A549 (cell line): ENCODE measurements at regions of chr20 and their contacts with region 1.

Region 1: GRCh38 chr20:62500237-62500864 is 24.6 kb upstream of the GATA5 start:
- DNase-seq: peak; percentile 40 to 80
- ATAC-seq: peak; percentile 55 to 77; a peak in 5 of 6 replicates
- H3K4me3 ChIP-seq: no peak overlapping the region
- H3K27ac ChIP-seq: no peak overlapping the region
- H3K4me1 ChIP-seq: peaks cover 14% of the 10 kb centered on the region
- CTCF ChIP-seq: peak; percentile 76
- EP300 ChIP-seq: no peak
- POLR2A ChIP-seq: no peak
- RAD21 ChIP-seq: peak; percentile 74 to 75

Region 2: DNA sequence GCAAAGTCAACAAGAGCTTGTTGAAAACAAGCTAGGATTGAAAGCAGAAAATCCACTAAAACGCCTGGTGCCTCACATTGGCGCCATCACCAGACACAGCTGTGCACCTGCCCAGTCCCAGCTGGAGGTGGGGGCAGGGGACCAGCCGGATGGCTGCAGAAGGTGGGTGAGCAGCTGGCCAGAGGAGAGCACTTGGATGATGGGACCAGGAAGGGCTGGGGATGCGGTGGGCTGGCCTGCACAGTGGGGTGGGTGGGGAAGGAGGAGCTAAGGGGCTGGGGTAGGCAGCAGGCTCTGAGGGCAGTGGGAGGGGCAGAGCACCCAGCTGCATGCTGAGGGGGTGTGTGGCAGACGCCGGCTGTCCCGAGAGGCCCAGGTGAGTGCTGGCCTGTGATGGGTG is 100.3 kb before region 1 on chr20:
- CTCF ChIA-PET with region 1: no interaction called
- POLR2A ChIA-PET with region 1: no interaction called
- DNase-seq: no peak
- ATAC-seq: no peak
- H3K4me3 ChIP-seq: no peak overlapping the region
- H3K27ac ChIP-seq: no peak overlapping the region
- H3K4me1 ChIP-seq: no peaks in the 10 kb centered on the region
- CTCF ChIP-seq: no peak
- EP300 ChIP-seq: no peak
- POLR2A ChIP-seq: no peak
- RAD21 ChIP-seq: no peak

Region 3: GRCh38 chr20:62409931-62410745 is 90.2 kb before region 1 on chr20:
- CTCF ChIA-PET with region 1: interaction called, 19 read pairs
- POLR2A ChIA-PET with region 1: no interaction called
- DNase-seq: peak; percentile 49 to 51
- ATAC-seq: peak; percentile 27 to 47; a peak in 5 of 6 replicates
- H3K4me3 ChIP-seq: 0 out of 3 replicates have a peak overlapping the region, but pooled peaks have one; percentile 7
- H3K27ac ChIP-seq: peak overlapping the region in 1 of 2 experiments; percentile 30; a peak in 2 of 6 replicates
- H3K4me1 ChIP-seq: peaks cover 21% of the 10 kb centered on the region
- CTCF ChIP-seq: peak; percentile 61
- EP300 ChIP-seq: no peak
- POLR2A ChIP-seq: no peak
- RAD21 ChIP-seq: peak; percentile 56 to 64

Region 4: DNA sequence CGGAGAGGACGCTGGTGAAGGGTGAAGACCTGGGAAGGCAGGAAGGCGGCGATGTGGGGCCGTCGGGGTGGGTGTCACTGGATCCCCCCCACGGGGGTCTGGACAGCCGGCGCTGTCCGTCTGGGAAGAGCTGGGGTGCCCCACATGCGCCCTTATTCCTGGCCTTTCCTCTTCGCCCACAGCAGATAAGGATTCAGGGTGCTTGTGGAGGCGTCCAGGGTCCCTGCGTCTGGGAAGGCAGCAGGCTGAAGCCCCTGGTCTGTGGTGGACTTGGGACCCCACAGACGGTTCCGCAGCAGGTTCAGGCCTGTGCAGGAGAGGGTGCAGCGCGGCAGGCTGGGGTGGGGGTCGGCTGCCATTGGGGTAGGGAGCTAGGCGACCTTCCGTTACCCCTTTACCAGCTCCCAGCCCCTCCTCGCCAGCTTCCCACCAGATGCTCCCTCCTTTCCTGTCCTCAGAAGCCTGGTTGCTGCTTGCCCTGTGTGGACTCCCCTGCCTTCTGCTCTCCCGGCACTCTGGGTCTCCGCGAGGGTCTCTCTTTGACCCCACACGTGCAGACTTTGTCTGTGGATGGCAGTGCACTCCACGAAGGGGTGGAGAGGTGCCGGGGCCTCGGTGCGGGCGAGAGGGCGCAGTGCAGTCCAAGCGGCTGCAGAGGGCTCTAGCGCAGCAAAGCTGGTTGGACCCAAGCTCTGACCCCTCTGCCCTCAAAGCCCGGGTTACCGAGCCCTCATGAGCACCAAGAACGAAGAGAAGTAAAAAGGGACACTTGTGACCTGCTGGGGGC is 22.5 kb before region 1 on chr20:
- CTCF ChIA-PET with region 1: interaction called, 21 read pairs
- POLR2A ChIA-PET with region 1: no interaction called
- DNase-seq: no peak
- ATAC-seq: peak; percentile 27 to 67; a peak in 3 of 6 replicates
- H3K4me3 ChIP-seq: no peak overlapping the region
- H3K27ac ChIP-seq: no peak overlapping the region
- H3K4me1 ChIP-seq: peaks cover 4% of the 10 kb centered on the region; the same call in 1 of the 3 replicates
- CTCF ChIP-seq: peak; percentile 8; the same call in 1 of the 3 replicates
- EP300 ChIP-seq: no peak
- POLR2A ChIP-seq: no peak
- RAD21 ChIP-seq: peak in 1 of 2 experiments; percentile 22; a peak in 1 of 5 replicates

Region 5: DNA sequence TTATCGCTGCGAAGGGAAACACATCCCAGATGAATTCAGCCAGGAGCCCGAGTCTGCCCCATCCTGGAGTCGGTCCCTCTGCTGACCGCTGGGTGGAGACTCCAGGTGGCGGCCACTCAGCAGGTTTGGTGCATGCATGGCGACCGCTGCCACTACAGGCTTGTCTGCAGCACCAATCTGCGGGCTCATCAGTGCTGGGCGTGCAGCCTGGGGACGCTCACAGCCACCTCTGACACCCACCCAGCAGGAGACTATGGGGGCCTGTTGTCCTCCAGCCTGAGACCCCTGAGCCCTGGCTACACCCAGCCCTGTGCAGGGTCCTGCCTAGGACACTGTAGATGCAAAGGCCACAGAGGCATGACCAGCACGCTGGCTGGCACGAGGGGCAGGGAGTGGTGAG is 16.0 kb after region 1 on chr20:
- CTCF ChIA-PET with region 1: interaction called, 11 read pairs
- POLR2A ChIA-PET with region 1: no interaction called
- DNase-seq: peak; percentile 64 to 76
- ATAC-seq: peak; percentile 86 to 93
- H3K4me3 ChIP-seq: no peak overlapping the region
- H3K27ac ChIP-seq: no peak overlapping the region
- H3K4me1 ChIP-seq: no peaks in the 10 kb centered on the region
- CTCF ChIP-seq: peak; percentile 55
- EP300 ChIP-seq: no peak
- POLR2A ChIP-seq: no peak
- RAD21 ChIP-seq: peak; percentile 55 to 60

Region 6: GRCh38 chr20:62576815-62577506 is 76.6 kb after region 1 on chr20:
- CTCF ChIA-PET with region 1: interaction called, 11 read pairs
- POLR2A ChIA-PET with region 1: no interaction called
- DNase-seq: no peak
- ATAC-seq: 0 out of 6 replicates have a peak, but pooled peaks of 1 of the 2 experiments have one; percentile 14
- H3K4me3 ChIP-seq: no peak overlapping the region
- H3K27ac ChIP-seq: no peak overlapping the region
- H3K4me1 ChIP-seq: peaks cover 6% of the 10 kb centered on the region; the same call in 1 of the 3 replicates
- CTCF ChIP-seq: no peak
- EP300 ChIP-seq: no peak
- POLR2A ChIP-seq: no peak
- RAD21 ChIP-seq: no peak

Region 7: DNA sequence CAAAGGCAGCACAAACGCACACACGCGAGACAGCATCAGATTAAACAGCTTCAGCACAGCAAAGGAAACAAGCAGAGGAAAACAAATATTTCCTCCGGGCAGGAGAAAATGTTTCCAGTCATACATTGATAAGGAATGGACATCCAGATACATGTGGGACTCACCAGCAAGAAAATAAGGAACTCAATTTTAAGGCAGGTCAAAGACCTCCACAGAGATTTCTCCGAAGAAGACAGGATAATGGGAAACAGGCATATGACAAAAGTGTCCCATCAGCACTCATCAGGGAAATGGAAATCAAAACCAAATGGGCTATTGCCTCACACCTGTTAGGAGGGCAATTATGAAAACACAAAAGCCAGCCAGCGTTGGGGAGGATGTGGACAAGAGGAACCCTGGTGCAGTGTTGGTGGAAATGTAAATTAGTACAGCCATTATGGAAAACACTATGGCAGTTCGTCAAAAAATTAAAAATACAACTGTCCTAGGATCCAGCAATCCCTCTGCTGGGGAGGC is 132.3 kb after region 1 on chr20:
- CTCF ChIA-PET with region 1: interaction called, 11 read pairs
- POLR2A ChIA-PET with region 1: no interaction called
- DNase-seq: no peak
- ATAC-seq: no peak
- H3K4me3 ChIP-seq: no peak overlapping the region
- H3K27ac ChIP-seq: no peak overlapping the region
- H3K4me1 ChIP-seq: peaks cover 8% of the 10 kb centered on the region; the same call in 2 of the 3 replicates
- CTCF ChIP-seq: no peak
- EP300 ChIP-seq: no peak
- POLR2A ChIP-seq: no peak
- RAD21 ChIP-seq: no peak